ENCODE measurements at regions of chr12 and their contacts with region 1.

Region 1: GRCh38 chr12:62785941-62786559 is 148.9 kb downstream of the PPM1H start:
- DNase-seq: no peak
- H3K4me3 ChIP-seq: no peak overlapping the region
- H3K27ac ChIP-seq: peak overlapping the region in 3 of 4 donors; percentile 16 to 35 (median 31)
- H3K4me1 ChIP-seq: no peaks in the 10 kb centered on the region
- H3K27me3 ChIP-seq: no peaks in the 10 kb centered on the region
- CTCF ChIP-seq: no peak
- EP300 ChIP-seq: no peak
- POLR2A ChIP-seq: no peak

Region 2: DNA sequence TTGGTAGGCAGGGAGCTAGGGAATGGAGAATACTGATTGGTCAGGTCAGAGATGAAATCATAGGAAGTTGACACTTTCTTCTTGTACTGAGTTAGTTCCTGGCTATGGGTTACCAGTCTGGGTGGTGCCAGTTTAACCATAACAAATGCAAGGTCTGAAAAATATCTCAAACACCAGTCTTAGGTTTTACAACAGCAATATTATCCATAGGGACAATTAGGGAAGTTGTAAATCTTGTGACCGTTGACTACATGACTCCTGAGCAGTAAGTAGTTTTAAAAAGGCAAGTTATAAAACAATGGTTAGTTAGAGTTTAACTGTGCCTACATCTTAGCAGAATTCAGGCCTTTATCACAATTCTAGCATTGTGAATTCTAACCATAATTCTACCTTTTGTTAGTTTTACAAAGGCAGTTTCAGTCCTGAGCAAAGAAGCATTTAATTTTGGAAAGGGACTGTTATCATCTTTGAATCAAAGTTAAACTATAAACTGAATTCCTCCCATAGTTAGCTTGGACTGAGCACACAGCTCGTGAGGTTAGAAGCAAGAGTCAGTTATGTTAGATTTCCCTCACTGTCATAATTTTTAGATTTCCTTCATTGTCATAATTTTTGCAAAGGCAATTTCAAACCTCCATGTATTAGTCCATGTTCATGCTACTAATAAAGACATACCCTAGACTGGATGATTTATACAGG is 339.1 kb before region 1 on chr12:
- in situ Hi-C with region 1: loop called in 3 of 4 experiments (anchors 10 to 25 kb)
- intact Hi-C with region 1: no loop called
- DNase-seq: no peak
- H3K4me3 ChIP-seq: no peak overlapping the region
- H3K27ac ChIP-seq: peak overlapping the region; percentile 18 to 56 (median 54)
- H3K4me1 ChIP-seq: peaks cover 0 to 5% (median 4%) of the 10 kb centered on the region in 4 donors
- H3K27me3 ChIP-seq: no peaks in the 10 kb centered on the region
- CTCF ChIP-seq: no peak
- EP300 ChIP-seq: no peak
- POLR2A ChIP-seq: no peak

Region 3: GRCh38 chr12:62581288-62582064 is 204.6 kb before region 1 on chr12:
- in situ Hi-C with region 1: loop called in 3 of 4 experiments (anchors 5 to 10 kb)
- intact Hi-C with region 1: no loop called
- DNase-seq: no peak
- H3K4me3 ChIP-seq: no peak overlapping the region
- H3K27ac ChIP-seq: no peak overlapping the region
- H3K4me1 ChIP-seq: no peaks in the 10 kb centered on the region
- H3K27me3 ChIP-seq: no peaks in the 10 kb centered on the region
- CTCF ChIP-seq: peak; percentile 64 to 69 (median 68)
- EP300 ChIP-seq: no peak
- POLR2A ChIP-seq: no peak

Region 4: DNA sequence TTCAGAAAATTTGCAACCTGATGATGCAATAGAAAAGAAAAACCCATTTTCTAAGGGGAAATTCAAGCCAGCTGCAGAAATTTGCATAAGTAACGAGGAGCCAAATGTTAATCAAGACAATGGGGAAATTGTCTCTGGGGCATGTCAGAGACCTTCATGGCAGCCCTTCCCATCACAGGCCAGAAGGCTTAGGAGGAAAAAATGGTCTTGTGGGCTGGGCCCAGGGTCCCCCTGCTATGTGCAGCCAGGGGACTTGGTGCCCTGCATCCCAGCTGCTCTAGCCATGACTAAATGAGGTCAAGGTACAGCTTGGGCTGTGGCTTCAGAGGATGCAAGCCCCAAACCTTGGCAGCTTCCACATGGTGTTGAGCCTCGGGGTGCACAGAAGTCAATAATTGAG is 393.2 kb after region 1 on chr12:
- in situ Hi-C with region 1: no loop called
- intact Hi-C with region 1: no loop called
- DNase-seq: no peak
- H3K4me3 ChIP-seq: no peak overlapping the region
- H3K27ac ChIP-seq: no peak overlapping the region
- H3K4me1 ChIP-seq: no peaks in the 10 kb centered on the region
- H3K27me3 ChIP-seq: no peaks in the 10 kb centered on the region
- CTCF ChIP-seq: no peak
- EP300 ChIP-seq: no peak
- POLR2A ChIP-seq: no peak